H1 (cell line): ENCODE measurements at regions of chr13 and their contacts with region 1.

Region 1: GRCh38 chr13:109610517-109610916 is 175.9 kb downstream of the IRS2 start:
- DNase-seq: peak; percentile 9 to 59
- H3K4me3 ChIP-seq: no peak overlapping the region
- H3K27ac ChIP-seq: no peak overlapping the region
- H3K4me1 ChIP-seq: no peaks in the 10 kb centered on the region
- H3K27me3 ChIP-seq: no peaks in the 10 kb centered on the region
- CTCF ChIP-seq: peak; percentile 65 to 68 (median 67)
- EP300 ChIP-seq: no peak
- POLR2A ChIP-seq: no peak
- RAD21 ChIP-seq: peak; percentile 62 to 76

Region 2: DNA sequence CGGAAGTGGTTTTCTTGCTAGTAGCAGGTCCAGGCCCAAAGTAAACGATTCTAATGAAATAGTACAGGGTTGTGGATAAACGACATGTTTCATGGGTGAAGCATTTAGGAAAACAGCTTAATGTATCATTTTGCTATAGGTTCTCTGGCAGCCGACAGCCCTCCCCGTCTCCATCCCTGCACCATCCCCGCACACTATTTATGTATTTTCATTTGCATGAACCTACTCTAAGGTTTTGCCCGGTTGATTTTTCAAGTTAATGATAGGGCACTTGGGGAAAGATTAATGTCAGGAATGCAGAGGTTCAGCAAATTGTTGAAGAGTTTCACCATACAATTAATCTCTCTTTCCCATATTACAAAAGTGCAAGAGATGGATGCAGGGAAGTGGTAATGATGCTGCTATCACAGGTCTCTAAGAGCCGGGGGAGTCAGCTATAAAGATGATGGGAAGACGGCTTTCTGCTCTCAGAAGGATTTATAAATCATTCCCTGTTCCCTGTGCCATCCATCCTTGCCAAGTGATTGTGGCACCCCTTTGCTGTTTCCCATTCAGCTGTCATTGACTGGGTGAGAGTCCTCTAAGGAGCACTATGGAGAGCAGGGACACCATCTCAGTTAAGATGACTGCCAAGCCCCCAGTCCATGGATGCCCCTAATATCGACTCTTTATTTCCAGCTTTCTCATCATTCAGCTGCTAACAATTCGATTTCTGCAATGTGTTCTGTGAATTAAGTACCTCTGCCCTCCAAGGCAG is 10.4 kb before region 1 on chr13:
- CTCF ChIA-PET with region 1: interaction called, 18 read pairs
- POLR2A ChIA-PET with region 1: no interaction called
- DNase-seq: no peak
- H3K4me3 ChIP-seq: no peak overlapping the region
- H3K27ac ChIP-seq: no peak overlapping the region
- H3K4me1 ChIP-seq: no peaks in the 10 kb centered on the region; a peak in 1 of 7 replicates
- H3K27me3 ChIP-seq: no peaks in the 10 kb centered on the region
- CTCF ChIP-seq: no peak
- EP300 ChIP-seq: no peak
- POLR2A ChIP-seq: no peak
- RAD21 ChIP-seq: no peak

Region 3: DNA sequence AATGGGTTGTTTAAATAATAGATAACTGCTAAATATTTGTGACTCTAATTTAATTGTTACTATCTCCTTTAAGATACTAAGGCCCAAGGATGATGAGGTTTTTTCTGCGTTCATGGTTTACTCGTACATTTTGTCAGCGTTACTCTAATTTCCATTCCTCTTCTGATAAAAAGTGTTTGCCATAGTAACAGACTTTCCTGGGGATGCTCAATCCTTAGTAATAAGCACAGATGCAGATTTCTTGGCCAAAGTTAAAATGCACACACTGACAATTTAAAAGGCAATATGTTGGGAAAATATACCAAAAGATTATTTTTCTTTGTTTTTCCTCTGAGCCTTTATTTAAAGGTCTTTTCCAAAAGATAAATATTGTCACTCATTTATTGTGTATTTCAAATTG is 26.2 kb after region 1 on chr13:
- CTCF ChIA-PET with region 1: no interaction called
- POLR2A ChIA-PET with region 1: no interaction called
- DNase-seq: no peak
- H3K4me3 ChIP-seq: no peak overlapping the region
- H3K27ac ChIP-seq: no peak overlapping the region
- H3K4me1 ChIP-seq: no peaks in the 10 kb centered on the region
- H3K27me3 ChIP-seq: no peaks in the 10 kb centered on the region
- CTCF ChIP-seq: no peak
- EP300 ChIP-seq: no peak
- POLR2A ChIP-seq: no peak
- RAD21 ChIP-seq: no peak

Region 4: GRCh38 chr13:109717686-109718085 is 107.2 kb after region 1 on chr13:
- CTCF ChIA-PET with region 1: no interaction called
- POLR2A ChIA-PET with region 1: no interaction called
- DNase-seq: no peak
- H3K4me3 ChIP-seq: no peak overlapping the region
- H3K27ac ChIP-seq: no peak overlapping the region
- H3K4me1 ChIP-seq: peaks cover 1 to 5% (median 3%) of the 10 kb centered on the region in 4 experiments; a peak in 3 of 7 replicates
- H3K27me3 ChIP-seq: no peaks in the 10 kb centered on the region
- CTCF ChIP-seq: no peak
- EP300 ChIP-seq: no peak
- POLR2A ChIP-seq: no peak
- RAD21 ChIP-seq: no peak